Caco-2 (cell line): ENCODE measurements at regions of chr12 and their contacts with region 1.

Region 1: DNA sequence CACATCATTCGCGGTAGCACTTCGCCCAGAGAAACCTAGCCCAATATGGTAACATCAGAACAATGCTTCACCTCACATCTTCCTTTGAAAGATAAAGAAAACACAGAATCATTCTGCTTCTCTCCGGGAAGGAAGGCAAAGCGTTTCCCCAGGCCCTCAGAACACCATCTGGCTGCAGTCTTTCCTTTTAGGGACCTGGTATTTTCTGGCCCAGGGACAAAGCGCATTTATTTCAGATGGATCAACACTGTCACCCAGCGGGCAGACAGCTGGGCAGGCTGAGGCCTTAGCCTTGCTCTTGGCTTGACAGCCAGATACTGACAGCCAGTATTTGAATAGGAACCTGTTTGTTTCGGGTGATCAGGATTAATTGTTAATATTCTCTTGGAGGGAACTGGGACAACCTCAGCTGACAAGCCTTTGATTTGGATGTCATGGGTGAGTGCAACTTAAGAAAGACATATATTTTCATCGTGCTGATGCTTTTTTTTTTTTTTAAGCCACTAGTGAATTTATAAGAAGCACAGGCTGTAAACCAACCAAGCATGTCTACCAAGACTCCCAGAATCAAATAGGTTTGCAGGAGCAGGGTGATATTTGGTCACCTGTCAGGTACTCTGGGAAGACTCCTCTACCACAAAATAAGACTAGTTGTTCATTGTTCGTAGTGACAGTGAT is 118.9 kb downstream of the VEZT start:
- DNase-seq: peak; percentile 84 to 85
- H3K4me3 ChIP-seq: no peak overlapping the region
- H3K4me3 Mint-ChIP-seq: peak overlapping the region; percentile 56
- H3K27ac Mint-ChIP-seq: peak overlapping the region; percentile 82
- H3K4me1 ChIP-seq: peaks cover 56% of the 10 kb centered on the region
- H3K4me1 Mint-ChIP-seq: peaks cover 26% of the 10 kb centered on the region
- H3K27me3 ChIP-seq: no peaks in the 10 kb centered on the region
- H3K27me3 Mint-ChIP-seq: no peaks in the 10 kb centered on the region
- CTCF ChIP-seq: peak; percentile 66 to 91

Region 2: GRCh38 chr12:94545935-94546771 is 790.4 kb before region 1 on chr12:
- CTCF ChIA-PET with region 1: no interaction called
- POLR2A ChIA-PET with region 1: no interaction called
- intact Hi-C with region 1: loop called (anchors 1 kb)
- DNase-seq: peak; percentile 40 to 66
- H3K4me3 ChIP-seq: no peak overlapping the region
- H3K4me3 Mint-ChIP-seq: no peak overlapping the region
- H3K27ac Mint-ChIP-seq: no peak overlapping the region
- H3K4me1 ChIP-seq: no peaks in the 10 kb centered on the region
- H3K4me1 Mint-ChIP-seq: no peaks in the 10 kb centered on the region
- H3K27me3 ChIP-seq: no peaks in the 10 kb centered on the region
- H3K27me3 Mint-ChIP-seq: no peaks in the 10 kb centered on the region
- CTCF ChIP-seq: peak; percentile 46 to 75

Region 3: GRCh38 chr12:95117178-95117599 is 219.3 kb before region 1 on chr12:
- CTCF ChIA-PET with region 1: interaction called, 20 read pairs
- POLR2A ChIA-PET with region 1: no interaction called
- intact Hi-C with region 1: loop called (anchors 1 kb)
- DNase-seq: peak; percentile 57 to 68
- H3K4me3 ChIP-seq: no peak overlapping the region
- H3K4me3 Mint-ChIP-seq: no peak overlapping the region
- H3K27ac Mint-ChIP-seq: no peak overlapping the region
- H3K4me1 ChIP-seq: 0 out of 2 replicates have a peak, but pooled peaks cover 4% of the 10 kb centered on the region
- H3K4me1 Mint-ChIP-seq: no peaks in the 10 kb centered on the region
- H3K27me3 ChIP-seq: no peaks in the 10 kb centered on the region
- H3K27me3 Mint-ChIP-seq: no peaks in the 10 kb centered on the region
- CTCF ChIP-seq: peak; percentile 48 to 74

Region 4: GRCh38 chr12:95385246-95386035 is 48.9 kb after region 1 on chr12:
- CTCF ChIA-PET with region 1: no interaction called
- POLR2A ChIA-PET with region 1: no interaction called
- intact Hi-C with region 1: no loop called
- DNase-seq: no peak
- H3K4me3 ChIP-seq: no peak overlapping the region
- H3K4me3 Mint-ChIP-seq: no peak overlapping the region
- H3K27ac Mint-ChIP-seq: no peak overlapping the region
- H3K4me1 ChIP-seq: peaks cover 7% of the 10 kb centered on the region; the same call in 1 of the 2 replicates
- H3K4me1 Mint-ChIP-seq: peaks cover 8% of the 10 kb centered on the region
- H3K27me3 ChIP-seq: no peaks in the 10 kb centered on the region
- H3K27me3 Mint-ChIP-seq: no peaks in the 10 kb centered on the region
- CTCF ChIP-seq: no peak

Region 5: DNA sequence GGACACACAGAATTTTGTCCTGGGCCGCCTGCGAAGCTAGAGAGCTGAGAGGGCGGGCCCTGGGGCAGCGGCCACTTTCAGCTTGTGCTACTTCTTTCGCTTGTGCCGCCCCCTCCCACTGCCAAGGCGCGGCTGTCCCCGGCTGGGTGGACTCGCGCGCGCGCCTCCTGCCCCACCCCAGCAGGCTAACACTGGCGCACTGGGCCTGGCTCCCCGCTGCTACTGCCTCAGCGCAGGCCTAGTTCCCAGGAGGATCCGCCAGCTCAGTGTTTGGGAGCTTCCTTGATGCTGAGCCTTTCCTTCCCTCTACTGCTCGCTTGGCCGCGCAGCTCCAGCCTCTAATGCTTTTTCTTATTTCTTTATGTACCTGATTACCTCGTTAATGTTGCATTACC is 110.0 kb after region 1 on chr12:
- CTCF ChIA-PET with region 1: no interaction called
- POLR2A ChIA-PET with region 1: no interaction called
- intact Hi-C with region 1: loop called (anchors 1 kb)
- DNase-seq: peak; percentile 87 to 88
- H3K4me3 ChIP-seq: peak overlapping the region; percentile 34
- H3K4me3 Mint-ChIP-seq: peak overlapping the region; percentile 74
- H3K27ac Mint-ChIP-seq: peak overlapping the region; percentile 93
- H3K4me1 ChIP-seq: peaks cover 44% of the 10 kb centered on the region
- H3K4me1 Mint-ChIP-seq: peaks cover 48% of the 10 kb centered on the region
- H3K27me3 ChIP-seq: no peaks in the 10 kb centered on the region
- H3K27me3 Mint-ChIP-seq: no peaks in the 10 kb centered on the region
- CTCF ChIP-seq: no peak

Region 6: DNA sequence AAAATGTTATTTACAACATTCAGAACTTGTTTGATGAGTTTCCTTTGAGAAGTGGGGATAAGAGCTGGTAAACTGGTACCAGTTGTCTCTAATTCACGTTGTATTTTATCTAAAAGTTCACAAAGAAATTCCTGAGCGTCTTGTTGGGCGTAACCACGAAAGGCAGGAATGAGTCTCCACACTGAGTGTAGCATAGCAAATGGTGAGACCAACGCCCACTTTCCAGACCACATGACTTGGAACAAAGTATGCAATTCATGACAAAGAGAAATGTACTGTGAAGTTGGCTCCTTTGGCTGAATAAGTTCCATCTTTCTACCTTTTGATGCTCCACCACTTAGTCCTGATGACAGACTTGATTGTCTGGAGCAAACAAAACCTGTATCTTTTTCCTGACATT is 196.3 kb after region 1 on chr12:
- CTCF ChIA-PET with region 1: interaction called, 10 read pairs
- POLR2A ChIA-PET with region 1: no interaction called
- intact Hi-C with region 1: loop called (anchors 1 kb)
- DNase-seq: no peak
- H3K4me3 ChIP-seq: no peak overlapping the region
- H3K4me3 Mint-ChIP-seq: no peak overlapping the region
- H3K27ac Mint-ChIP-seq: no peak overlapping the region
- H3K4me1 ChIP-seq: peaks cover 22% of the 10 kb centered on the region
- H3K4me1 Mint-ChIP-seq: peaks cover 28% of the 10 kb centered on the region
- H3K27me3 ChIP-seq: no peaks in the 10 kb centered on the region
- H3K27me3 Mint-ChIP-seq: no peaks in the 10 kb centered on the region
- CTCF ChIP-seq: no peak